ENCODE measurements at regions of chr4 and their contacts with region 1.

Region 1: GRCh38 chr4:163166041-163166579 is 580 bp downstream of the NAF1 start:
- DNase-seq: peak; percentile 20
- H3K4me3 ChIP-seq: peak overlapping the region; percentile 62 to 90
- H3K27ac ChIP-seq: peak overlapping the region; percentile 84 to 89
- H3K4me1 ChIP-seq: peaks cover 2% of the 10 kb centered on the region
- H3K27me3 ChIP-seq: no peaks in the 10 kb centered on the region
- CTCF ChIP-seq: no peak
- POLR2A ChIP-seq: no peak

Region 2: DNA sequence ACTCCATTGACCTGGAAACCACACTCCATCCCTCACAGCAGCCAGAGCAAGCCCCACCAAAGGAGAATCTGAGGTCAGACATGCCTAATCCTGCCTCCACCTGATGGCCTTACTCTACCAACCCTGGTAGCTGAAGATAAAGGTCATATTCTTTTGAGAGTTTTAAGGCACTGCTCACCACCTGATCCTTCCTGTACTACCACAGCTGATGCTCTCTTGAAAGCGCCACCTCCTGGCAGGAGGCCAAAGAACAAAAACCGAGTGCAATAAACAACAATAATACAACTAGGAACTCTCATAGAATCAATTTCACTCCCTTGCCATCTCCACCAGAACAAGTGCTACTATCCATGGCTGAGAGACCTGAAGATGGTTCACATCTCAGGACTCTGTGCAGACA is 301.0 kb before region 1 on chr4:
- intact Hi-C with region 1: no loop called
- DNase-seq: no peak
- H3K4me3 ChIP-seq: no peak overlapping the region
- H3K27ac ChIP-seq: no peak overlapping the region
- H3K4me1 ChIP-seq: no peaks in the 10 kb centered on the region
- H3K27me3 ChIP-seq: no peaks in the 10 kb centered on the region
- CTCF ChIP-seq: no peak
- POLR2A ChIP-seq: no peak

Region 3: GRCh38 chr4:163494360-163495162 is 328.5 kb after region 1 on chr4 and contains the start of gene TMA16:
- intact Hi-C with region 1: loop called (anchors 10 kb)
- DNase-seq: peak; percentile 66
- H3K4me3 ChIP-seq: peak within 1 kb of the TSS; percentile 51 to 64
- H3K27ac ChIP-seq: peak within 1 kb of the TSS; percentile 77
- H3K4me1 ChIP-seq: no peaks in the 10 kb centered on the region
- H3K27me3 ChIP-seq: no peaks in the 10 kb centered on the region
- CTCF ChIP-seq: peak in 1 of 4 experiments; percentile 18
- POLR2A ChIP-seq: peak; percentile 39
- total RNA-seq, gene TMA16: 12.9 to 17.3 TPM

Measured in prostate gland (tissue), 2 donors.